Activated CD4-positive, alpha-beta T cell treated with anti-CD3 and anti-CD28 coated beads for 36 hours (primary cell): ENCODE measurements at regions of chr5 and their contacts with region 1.

Region 1: DNA sequence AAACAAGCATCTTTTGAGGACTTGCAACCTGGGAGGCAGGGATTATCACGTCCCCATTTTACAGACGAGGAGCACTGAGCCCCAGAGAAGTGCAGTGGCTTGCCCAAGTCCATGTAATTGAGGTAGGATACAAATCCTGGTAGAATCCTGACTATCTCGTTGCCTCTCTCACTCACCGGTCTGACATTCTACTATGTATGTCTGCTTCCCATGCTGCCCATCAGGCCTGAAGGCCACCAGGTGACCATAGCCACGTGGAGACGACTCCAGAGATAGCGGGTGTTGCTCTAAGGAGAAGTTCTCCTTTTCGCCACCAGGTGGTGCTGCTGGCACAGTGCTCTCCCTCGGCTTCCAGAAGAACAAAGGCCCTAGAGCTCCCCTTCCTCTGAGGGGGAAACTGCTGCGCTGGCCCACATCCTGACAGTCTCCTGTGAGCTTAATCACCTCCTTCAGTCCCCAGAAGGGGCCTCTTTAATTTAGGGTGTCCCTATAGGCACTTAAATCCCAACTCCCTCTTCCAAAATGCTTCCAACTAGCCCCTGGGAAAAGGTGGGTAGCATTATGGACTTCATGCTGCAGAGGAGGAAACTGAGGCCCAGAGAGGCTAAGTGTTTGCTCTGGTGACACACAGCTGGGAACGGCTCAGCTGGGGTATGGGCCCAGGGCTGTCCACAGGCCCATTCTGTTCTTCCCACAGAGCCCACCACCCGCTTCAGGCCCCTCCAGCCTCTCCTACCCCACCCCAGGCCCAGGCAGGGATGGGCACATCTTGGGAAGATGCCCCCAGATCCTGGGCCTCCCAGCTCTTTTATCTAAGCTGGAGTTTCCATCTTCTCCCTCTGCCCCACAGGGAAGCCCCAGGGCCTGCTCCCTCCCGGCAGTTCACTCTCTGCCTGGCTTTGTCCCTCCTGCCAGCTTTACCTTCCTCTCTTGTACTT is 6.4 kb downstream of the SLC34A1 start:
- DNase-seq: peak; percentile 94
- ATAC-seq: peak; percentile 68
- H3K4me3 Mint-ChIP-seq: peak overlapping the region; percentile 52
- H3K27ac Mint-ChIP-seq: peak overlapping the region; percentile 87
- H3K4me1 Mint-ChIP-seq: peaks cover 36% of the 10 kb centered on the region
- H3K27me3 Mint-ChIP-seq: no peaks in the 10 kb centered on the region

Region 2: DNA sequence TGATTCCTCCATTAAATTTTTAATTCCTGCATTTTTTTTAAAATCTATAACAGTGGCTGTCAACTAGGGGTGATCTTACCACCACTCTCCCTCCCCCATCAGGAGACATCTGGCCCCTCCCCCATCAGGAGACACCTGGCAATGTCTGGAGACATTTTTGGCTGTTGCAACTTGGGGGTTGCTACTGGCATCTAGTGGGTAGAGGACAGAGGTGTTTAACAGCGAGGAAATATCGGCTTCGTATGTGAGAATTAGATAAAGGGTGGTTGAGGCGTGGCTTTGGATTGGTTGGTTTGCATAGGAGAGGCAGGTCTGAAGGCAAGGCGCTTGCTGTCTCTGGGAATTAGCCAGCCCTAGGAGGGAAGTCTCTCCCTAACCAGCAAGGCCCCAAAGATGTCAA is 830.9 kb before region 1 on chr5:
- CTCF ChIA-PET with region 1: no interaction called
- POLR2A ChIA-PET with region 1: no interaction called
- intact Hi-C with region 1: no loop called
- DNase-seq: peak; percentile 45
- ATAC-seq: peak; percentile 47
- H3K4me3 Mint-ChIP-seq: no peak overlapping the region
- H3K27ac Mint-ChIP-seq: no peak overlapping the region
- H3K4me1 Mint-ChIP-seq: peaks cover 41% of the 10 kb centered on the region
- H3K27me3 Mint-ChIP-seq: peaks cover 3% of the 10 kb centered on the region

Region 3: DNA sequence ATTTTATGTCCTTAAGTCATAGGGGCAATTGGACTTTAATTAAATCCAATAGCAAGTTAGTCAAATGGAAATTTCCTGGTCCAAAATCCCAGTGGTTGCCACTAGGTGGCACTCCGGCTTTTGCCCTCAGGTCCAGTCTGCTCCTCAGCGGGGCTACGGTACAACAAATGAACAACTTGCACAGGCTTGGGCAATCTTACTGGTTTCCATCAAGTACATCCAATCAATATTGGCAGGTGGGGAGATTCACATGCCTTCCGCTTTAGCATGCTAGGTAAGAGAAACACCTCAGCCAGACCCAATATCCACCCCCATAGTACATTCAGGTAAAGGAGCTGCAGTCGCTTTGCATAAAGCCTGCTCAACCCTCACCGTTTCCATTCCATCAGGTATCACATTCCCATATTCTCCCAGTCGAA is 72.7 kb before region 1 on chr5:
- CTCF ChIA-PET with region 1: interaction called, 10 read pairs
- POLR2A ChIA-PET with region 1: interaction called, 5 read pairs
- intact Hi-C with region 1: loop called (anchors 1 to 10 kb)
- DNase-seq: peak; percentile 87
- ATAC-seq: peak; percentile 75
- H3K4me3 Mint-ChIP-seq: no peak overlapping the region
- H3K27ac Mint-ChIP-seq: no peak overlapping the region
- H3K4me1 Mint-ChIP-seq: peaks cover 19% of the 10 kb centered on the region
- H3K27me3 Mint-ChIP-seq: no peaks in the 10 kb centered on the region

Region 4: DNA sequence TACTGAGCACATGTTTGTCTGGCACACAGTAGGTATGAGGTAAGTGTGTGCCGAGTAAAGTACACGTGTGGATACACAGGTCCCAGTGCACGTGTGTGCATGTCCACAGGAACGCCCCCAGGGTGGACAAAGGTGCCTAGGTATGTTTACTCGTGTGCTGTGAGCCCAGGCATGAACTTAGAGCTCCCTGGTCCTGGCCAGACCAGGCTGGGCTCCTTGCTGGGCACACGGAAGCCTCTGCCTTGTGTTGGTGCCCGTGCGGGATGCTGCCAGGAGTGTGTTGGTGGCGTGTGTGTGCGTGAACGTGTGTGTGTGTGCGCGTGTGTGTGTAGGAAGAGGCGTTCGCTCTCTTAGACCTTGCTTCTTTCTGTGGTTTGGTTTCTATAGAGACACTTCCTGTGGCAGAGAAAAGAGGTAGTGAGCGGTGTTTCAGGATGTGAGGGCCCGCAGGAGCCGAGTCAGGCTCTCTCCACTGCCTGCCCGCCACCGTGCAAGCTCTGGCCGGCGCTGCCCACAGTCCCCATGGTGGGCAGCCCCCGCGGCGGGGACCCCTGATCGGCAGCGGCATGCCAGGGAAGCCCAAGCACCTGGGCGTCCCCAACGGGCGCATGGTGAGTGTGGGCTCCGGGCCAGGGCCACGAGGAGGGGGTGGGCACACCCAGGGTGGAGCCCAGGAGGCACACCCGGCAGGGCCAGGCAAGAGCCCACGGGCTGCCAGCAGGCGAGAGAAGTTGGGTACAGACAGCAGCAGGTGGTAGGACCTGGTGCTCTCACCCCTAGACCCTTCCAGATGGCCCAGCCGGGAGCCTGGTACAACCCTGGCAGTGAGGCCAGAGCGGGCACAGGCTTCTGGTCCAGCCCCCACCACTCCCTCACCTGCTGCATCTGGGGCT is 32.9 kb before region 1 on chr5 and contains the start of gene RGS14:
- CTCF ChIA-PET with region 1: interaction called, 25 read pairs
- POLR2A ChIA-PET with region 1: interaction called, 4 read pairs
- intact Hi-C with region 1: loop called in 1 of 2 experiments (anchors 5 kb)
- DNase-seq: peak; percentile 74
- ATAC-seq: peak; percentile 90
- H3K4me3 Mint-ChIP-seq: peak within 1 kb of the TSS; percentile 82
- H3K27ac Mint-ChIP-seq: peak within 1 kb of the TSS; percentile 79
- H3K4me1 Mint-ChIP-seq: peaks cover 68% of the 10 kb centered on the region
- H3K27me3 Mint-ChIP-seq: no peaks in the 10 kb centered on the region
- total RNA-seq, gene RGS14: 43.8 to 62.0 TPM

Region 5: DNA sequence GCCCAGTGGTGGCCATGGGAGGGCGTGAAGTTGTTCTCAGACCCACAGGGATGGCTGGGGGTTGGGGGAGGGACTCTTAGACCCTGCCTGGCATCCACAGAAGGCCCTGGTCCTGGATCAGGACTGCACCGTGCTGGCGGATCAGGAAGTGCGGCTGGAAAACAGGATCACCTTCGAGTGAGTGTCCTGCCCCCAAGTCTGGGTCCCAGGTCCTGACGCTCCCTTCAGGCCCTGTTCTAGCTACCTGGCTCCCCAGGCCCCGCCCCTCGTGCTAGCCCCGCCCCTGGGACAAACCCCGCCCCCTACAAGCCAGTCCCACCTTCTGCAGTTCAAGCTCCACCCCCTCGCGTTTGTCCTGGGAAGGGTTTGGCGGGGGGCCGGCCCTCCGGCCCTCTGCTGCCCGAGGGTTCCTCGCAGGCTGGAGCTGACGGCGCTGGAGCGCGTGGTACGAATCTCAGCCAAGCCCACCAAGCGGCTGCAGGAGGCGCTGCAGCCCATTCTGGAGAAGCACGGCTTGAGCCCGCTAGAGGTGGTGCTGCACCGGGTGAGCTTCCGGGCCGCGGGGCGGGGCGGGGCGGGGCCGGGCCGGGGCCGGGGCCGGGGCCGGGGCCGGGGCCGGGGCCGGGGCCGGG is 20.0 kb before region 1 on chr5:
- CTCF ChIA-PET with region 1: interaction called, 65 read pairs
- POLR2A ChIA-PET with region 1: interaction called, 3 read pairs
- intact Hi-C with region 1: no loop called
- DNase-seq: peak; percentile 76
- ATAC-seq: peak; percentile 66
- H3K4me3 Mint-ChIP-seq: peak overlapping the region; percentile 53
- H3K27ac Mint-ChIP-seq: no peak overlapping the region
- H3K4me1 Mint-ChIP-seq: peaks cover 70% of the 10 kb centered on the region
- H3K27me3 Mint-ChIP-seq: no peaks in the 10 kb centered on the region

Region 6: DNA sequence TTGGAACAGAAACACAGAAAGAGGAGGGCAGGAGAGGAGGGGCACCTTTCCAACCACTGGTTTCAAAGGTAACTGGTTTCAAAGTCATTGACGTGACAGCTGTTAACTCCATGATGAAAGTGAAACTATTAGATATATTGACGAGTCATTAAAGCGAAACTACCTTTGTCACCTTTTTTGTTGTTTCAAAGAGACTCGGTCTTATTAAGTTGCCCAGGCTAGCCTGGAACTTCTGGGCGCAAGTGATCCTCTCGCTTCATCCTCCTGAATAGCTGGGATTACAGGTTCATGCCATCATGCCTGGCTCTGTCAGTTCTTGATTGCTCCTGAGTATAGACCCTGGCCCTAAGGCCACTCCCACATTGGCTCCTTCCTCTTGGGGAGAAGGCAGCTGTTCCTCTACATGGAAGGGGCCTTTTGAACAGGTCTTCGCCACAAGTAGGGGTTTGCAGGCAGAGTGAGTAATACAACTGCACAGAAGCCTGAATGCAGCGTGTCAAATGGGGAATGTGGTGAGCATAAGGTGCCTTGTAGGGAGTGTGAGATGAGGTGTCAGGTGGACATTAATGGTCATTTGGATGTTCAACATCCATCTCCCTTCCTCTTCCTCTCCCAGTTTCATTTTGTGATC is 22.1 kb after region 1 on chr5:
- CTCF ChIA-PET with region 1: interaction called, 21 read pairs
- POLR2A ChIA-PET with region 1: no interaction called
- intact Hi-C with region 1: no loop called
- DNase-seq: peak; percentile 33
- ATAC-seq: peak; percentile 80
- H3K4me3 Mint-ChIP-seq: no peak overlapping the region
- H3K27ac Mint-ChIP-seq: peak overlapping the region; percentile 55
- H3K4me1 Mint-ChIP-seq: peaks cover 36% of the 10 kb centered on the region
- H3K27me3 Mint-ChIP-seq: no peaks in the 10 kb centered on the region

Region 7: GRCh38 chr5:177446200-177447065 is 55.8 kb after region 1 on chr5 and contains the start of gene PRR7:
- CTCF ChIA-PET with region 1: interaction called, 92 read pairs
- POLR2A ChIA-PET with region 1: interaction called, 4 read pairs
- intact Hi-C with region 1: no loop called
- DNase-seq: peak; percentile 83
- ATAC-seq: peak; percentile 54
- H3K4me3 Mint-ChIP-seq: peak within 1 kb of the TSS; percentile 51
- H3K27ac Mint-ChIP-seq: peak within 1 kb of the TSS; percentile 89
- H3K4me1 Mint-ChIP-seq: peaks cover 43% of the 10 kb centered on the region
- H3K27me3 Mint-ChIP-seq: no peaks in the 10 kb centered on the region
- total RNA-seq, gene PRR7: 12.3 to 13.0 TPM

Region 8: DNA sequence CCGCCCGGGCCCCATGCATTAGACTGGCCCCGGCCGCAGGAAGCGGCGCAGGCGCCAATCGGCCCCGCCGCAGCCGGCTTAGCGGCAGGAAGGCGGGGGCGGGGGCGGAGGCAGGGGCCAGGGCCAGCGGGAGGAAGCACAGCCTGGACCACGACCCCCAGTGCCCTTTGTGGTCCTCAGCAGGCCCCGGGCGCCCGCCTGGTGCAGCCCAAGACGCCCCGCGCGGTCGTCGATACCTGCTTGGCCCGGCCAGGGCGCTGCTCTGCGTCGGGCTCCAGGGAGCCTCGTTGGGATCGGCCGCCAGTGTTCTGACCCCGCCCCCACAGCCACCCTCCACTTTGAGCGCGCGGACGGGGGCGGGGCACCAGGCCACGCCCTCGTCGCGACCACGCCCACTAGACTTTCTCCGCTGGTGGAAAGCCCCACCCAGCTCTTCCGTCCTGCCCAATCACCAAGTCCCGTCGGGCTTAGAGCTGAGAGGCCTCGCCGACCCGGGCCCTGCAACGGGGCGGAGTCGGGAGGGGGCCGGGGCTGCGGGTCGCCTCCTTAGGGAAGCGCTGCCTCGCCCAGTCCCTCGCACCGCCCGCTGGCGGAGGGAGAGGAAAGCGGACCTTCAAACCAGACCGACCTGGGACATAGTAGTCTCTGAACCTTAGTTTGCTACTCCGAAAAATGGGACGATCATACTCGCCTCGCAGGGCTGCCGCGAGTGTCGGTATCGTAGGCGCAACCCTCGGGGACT is 106.8 kb after region 1 on chr5 and contains the start of gene PDLIM7:
- CTCF ChIA-PET with region 1: interaction called, 25 read pairs
- POLR2A ChIA-PET with region 1: no interaction called
- intact Hi-C with region 1: loop called (anchors 1 kb)
- DNase-seq: peak; percentile 98
- ATAC-seq: peak; percentile 86
- H3K4me3 Mint-ChIP-seq: peak within 1 kb of the TSS; percentile 73
- H3K27ac Mint-ChIP-seq: peak within 1 kb of the TSS; percentile 37
- H3K4me1 Mint-ChIP-seq: peaks cover 31% of the 10 kb centered on the region
- H3K27me3 Mint-ChIP-seq: peaks cover 12% of the 10 kb centered on the region
- total RNA-seq, gene PDLIM7: 41.9 to 50.2 TPM